ENCODE measurements at regions of chr2 and their contacts with region 1.

Region 1: GRCh38 chr2:203238704-203239526 is at the start of gene CYP20A1:
- DNase-seq: peak; percentile 98
- total RNA-seq, gene CYP20A1: 13.1 TPM

Region 2: DNA sequence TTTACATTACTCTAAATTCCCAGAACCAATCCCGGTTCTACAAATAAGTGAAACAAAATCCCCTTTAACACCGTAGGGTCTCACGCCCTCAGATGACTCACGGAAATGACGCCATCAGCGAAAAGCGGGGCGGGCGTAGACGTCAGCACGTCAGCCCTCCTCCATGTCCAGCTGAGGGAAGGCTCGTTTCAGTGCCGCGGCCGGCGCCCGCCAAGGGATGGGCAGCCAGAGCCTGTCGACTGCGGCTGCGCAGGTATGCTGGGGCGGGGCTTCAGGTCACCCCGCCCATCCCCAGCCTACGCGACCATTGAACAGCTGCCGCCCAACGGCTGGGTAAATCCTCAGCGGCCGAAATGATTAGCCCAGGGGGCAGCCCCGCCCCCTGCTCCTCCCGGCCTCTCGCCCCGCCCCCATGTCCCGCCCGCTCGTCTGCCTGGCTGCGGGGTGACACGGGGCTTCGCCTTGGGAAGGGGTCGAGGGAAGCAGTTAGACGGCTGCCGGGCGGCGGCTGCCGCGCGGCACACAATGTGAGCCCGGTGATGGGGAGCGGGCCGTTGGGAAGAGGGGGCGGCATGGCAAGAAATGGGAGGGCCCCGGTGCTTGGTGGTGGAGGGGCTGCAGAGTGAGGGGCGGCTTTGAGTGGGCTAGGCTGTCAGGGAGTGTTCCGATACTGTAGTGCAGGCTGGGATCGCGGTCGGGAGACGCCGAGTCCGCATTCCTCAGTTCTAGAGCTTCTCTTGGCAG is 224.3 kb before region 1 on chr2 and contains the start of gene NBEAL1:
- intact Hi-C with region 1: loop called (anchors 2 kb)
- DNase-seq: peak; percentile 100
- total RNA-seq, gene NBEAL1: 28.7 TPM

Region 3: DNA sequence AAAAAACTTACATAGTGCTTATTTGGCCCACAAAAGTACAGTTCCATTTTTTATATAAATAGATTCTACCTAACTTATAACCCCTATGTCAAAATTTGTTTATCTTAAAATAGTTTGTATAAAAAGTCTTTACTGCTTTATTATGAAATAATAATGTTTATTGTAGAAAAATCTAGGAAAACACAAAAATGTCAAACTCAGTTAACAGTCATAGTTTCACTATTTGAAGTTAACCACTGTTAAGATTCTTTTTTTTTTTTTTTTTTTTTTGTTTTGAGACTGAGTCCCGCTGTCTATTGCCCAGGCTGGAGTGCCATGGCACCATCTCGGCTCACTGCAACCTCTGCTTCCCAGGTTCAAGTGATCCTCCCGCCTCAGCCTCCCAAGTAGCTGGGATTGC is 62.8 kb after region 1 on chr2:
- intact Hi-C with region 1: no loop called
- DNase-seq: no peak

Region 4: DNA sequence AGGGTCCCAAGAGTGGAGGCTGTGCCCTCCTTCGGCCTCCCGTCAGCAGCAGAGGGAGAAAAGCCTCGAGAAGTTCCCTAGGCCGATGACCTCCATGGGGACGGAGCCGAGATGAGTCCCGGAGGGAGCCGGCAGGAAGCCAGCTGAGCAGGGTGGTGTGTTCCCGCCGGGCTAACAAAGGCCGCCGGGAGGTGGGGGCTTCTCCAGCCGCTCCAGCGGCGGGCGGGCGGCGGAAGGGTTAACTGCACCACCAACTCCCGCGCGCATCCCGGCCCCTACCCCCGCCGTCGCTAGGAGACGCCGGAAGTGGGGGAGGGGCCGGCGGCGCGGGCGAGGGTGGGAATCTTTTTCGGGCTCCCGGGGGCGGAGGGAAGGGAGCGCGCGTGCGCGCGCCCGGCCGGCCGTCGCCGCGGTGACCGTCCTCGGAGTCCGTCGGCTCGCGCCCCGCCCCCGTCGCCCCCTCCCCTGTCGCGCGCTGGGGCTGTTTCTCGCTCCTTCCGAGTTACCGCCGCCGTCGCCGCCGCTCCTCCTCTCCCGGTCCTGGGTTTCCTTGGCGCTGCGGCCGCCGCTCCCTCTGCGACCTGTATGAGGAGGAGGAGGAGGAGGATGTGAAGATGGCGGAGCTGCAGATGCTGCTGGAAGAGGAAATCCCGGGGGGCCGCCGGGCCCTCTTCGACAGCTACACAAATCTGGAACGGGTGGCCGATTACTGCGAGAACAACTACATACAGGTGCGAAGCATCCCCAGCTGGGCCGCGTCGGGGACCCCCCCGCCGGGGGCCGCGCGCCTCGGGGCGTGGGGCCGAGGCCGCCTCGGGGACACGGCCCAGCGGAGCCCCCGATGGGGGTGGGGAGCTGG is 89.2 kb after region 1 on chr2 and contains the start of gene ABI2:
- intact Hi-C with region 1: loop called (anchors 5 kb)
- DNase-seq: peak; percentile 92
- total RNA-seq, gene ABI2: 91.7 TPM

Region 5: GRCh38 chr2:203453858-203454451 is 215.0 kb after region 1 on chr2:
- intact Hi-C with region 1: loop called (anchors 5 kb)
- DNase-seq: no peak

Region 6: GRCh38 chr2:203706403-203706802 is 467.5 kb after region 1 on chr2 and contains the start of gene CD28:
- intact Hi-C with region 1: no loop called
- DNase-seq: no peak
- total RNA-seq, gene CD28: 1.3 TPM

Region 7: DNA sequence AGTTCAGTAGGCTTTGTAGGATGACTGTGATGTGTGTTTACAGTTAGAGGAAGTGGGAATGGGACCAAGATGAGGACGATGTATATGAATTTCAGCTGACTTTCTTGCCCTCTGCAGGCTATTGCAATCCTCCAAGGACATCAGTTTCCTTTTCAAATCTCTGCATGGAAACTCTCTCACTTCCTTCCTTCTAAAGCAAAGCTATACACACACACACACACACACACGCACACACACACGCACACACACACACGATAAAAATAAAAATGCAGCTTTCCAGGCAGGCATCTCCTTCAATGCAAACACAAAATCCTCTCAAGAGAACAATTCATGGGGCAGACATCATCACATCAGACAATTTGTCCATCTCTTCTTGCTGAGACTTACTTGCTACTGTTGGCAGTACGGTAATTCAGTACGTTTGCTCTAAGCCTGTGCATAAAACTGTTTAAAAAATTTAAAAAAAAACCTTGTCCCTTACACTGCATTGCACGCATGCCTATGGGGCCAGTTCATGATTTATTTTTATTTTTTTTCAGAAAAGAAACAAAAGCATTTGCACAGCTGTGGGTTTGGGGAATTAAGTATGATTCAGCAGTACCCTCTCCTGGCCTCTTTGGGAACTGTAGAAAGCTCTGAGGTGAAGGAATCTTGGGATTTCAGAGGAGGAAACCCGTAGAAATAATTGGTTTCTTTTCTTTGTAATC is 670.5 kb after region 1 on chr2:
- intact Hi-C with region 1: loop called (anchors 10 kb)
- DNase-seq: no peak

Measured in cardiac septum (tissue), 1 donor.